ENCODE measurements at regions of chr2 and their contacts with region 1.

Region 1: GRCh38 chr2:54115284-54116137 is at the start of gene ACYP2:
- DNase-seq: peak; percentile 67
- ATAC-seq: peak; percentile 97
- H3K4me3 ChIP-seq: peak within 1 kb of the TSS; percentile 74 to 80
- H3K27ac ChIP-seq: peak within 1 kb of the TSS; percentile 90
- H3K4me1 ChIP-seq: peaks cover 4% of the 10 kb centered on the region; the same call in 1 of the 2 replicates
- H3K27me3 ChIP-seq: no peaks in the 10 kb centered on the region
- CTCF ChIP-seq: peak; percentile 31
- total RNA-seq, gene ACYP2: 11.5 TPM

Region 2: DNA sequence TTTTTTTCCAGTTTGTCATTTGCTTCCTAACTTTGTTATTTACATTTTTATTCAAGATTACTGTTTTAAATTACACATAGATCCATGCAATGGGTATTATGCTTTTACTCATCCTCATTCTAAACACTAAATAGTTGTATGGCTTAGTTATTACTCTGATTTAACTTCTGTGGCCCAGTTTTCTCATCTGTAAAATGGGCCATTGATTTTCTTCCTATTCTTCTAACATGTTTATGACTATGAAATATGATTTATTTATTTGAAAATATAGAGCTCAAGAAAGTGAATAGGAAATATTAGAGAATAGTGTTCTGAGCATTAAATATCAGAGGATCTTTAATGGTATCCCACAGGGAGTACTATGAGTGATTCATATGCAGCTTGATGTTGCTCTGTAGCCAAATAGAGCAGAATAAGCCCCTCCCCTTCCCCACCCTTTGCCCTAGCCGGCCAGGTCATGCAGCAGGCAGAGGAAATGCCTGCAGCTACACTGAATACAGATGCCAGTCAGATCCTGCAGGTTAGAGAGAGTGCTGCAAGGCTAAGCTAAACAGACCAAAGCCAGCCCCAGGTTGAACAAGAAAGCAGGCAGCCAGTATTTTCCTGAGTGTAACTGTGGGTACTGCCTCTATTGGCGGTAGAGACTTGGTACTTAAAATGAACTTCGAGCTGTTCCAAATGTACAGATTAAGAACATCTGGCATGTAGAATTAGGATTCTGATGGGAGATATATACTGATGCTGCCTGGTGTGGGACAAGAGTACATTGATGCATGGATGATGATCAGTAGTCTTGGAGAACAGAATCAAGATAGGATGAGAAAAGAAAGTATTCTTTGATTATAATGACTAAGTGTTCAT is 11.8 kb before region 1 on chr2:
- CTCF ChIA-PET with region 1: no interaction called
- POLR2A ChIA-PET with region 1: no interaction called
- in situ Hi-C with region 1: no loop called
- intact Hi-C with region 1: no loop called
- DNase-seq: no peak
- ATAC-seq: peak; percentile 85
- H3K4me3 ChIP-seq: no peak overlapping the region
- H3K27ac ChIP-seq: no peak overlapping the region
- H3K4me1 ChIP-seq: no peaks in the 10 kb centered on the region
- H3K27me3 ChIP-seq: no peaks in the 10 kb centered on the region
- CTCF ChIP-seq: no peak

Region 3: DNA sequence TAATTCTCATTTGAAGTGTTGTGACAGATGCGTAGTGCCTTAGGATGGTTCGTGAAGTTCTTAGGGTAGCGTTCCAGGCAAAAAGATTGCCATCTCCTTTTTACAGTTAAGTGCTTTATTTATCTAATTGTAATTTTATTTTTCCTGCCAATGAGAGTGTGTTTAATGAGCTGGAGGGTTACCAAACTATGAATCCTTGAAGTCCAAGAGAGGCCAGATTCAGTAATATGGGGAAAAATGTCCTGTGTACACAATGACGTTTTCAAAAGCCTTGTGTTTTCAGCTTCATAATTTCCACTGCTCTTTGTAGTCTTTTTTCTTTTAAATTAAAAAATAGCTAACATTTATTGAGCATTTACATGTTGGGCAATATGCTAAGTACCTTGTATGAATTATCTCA is 23.7 kb after region 1 on chr2:
- CTCF ChIA-PET with region 1: no interaction called
- POLR2A ChIA-PET with region 1: interaction called, 13 read pairs
- in situ Hi-C with region 1: no loop called
- intact Hi-C with region 1: no loop called
- DNase-seq: no peak
- ATAC-seq: no peak
- H3K4me3 ChIP-seq: no peak overlapping the region
- H3K27ac ChIP-seq: no peak overlapping the region
- H3K4me1 ChIP-seq: no peaks in the 10 kb centered on the region
- H3K27me3 ChIP-seq: no peaks in the 10 kb centered on the region
- CTCF ChIP-seq: no peak

Region 4: GRCh38 chr2:54699665-54700064 is 584.2 kb after region 1 on chr2:
- CTCF ChIA-PET with region 1: interaction called, 4 read pairs
- POLR2A ChIA-PET with region 1: interaction called, 12 read pairs
- in situ Hi-C with region 1: no loop called
- intact Hi-C with region 1: no loop called
- DNase-seq: no peak
- ATAC-seq: no peak
- H3K4me3 ChIP-seq: no peak overlapping the region
- H3K27ac ChIP-seq: no peak overlapping the region
- H3K4me1 ChIP-seq: no peaks in the 10 kb centered on the region
- H3K27me3 ChIP-seq: no peaks in the 10 kb centered on the region
- CTCF ChIP-seq: no peak

Region 5: DNA sequence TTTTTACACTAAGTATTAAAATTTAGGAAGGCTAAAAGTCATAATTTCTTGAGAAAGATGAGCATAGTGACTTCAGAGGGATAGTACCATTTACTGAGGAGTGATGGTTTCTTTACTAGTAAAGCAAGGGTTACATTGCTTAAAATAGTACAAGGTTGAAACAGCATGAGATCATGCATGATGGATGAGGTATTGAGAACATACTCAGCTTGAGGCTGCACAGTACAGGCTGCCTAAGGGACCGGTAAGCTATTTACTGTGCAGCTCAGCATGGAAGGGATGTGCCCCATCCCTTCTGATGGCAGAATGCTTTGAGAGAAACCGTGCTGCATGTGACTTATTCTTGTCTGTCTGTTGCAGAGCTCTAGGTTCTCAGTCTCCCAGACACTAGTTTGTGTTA is 730.0 kb after region 1 on chr2:
- CTCF ChIA-PET with region 1: no interaction called
- POLR2A ChIA-PET with region 1: no interaction called
- in situ Hi-C with region 1: no loop called
- intact Hi-C with region 1: no loop called
- DNase-seq: no peak
- ATAC-seq: no peak
- H3K4me3 ChIP-seq: no peak overlapping the region
- H3K27ac ChIP-seq: no peak overlapping the region
- H3K4me1 ChIP-seq: no peaks in the 10 kb centered on the region
- H3K27me3 ChIP-seq: no peaks in the 10 kb centered on the region
- CTCF ChIP-seq: no peak

Measured in Panc1 (cell line).